HEK293 (cell line): ENCODE measurements at regions of chr12 and their contacts with region 1.

Region 1: DNA sequence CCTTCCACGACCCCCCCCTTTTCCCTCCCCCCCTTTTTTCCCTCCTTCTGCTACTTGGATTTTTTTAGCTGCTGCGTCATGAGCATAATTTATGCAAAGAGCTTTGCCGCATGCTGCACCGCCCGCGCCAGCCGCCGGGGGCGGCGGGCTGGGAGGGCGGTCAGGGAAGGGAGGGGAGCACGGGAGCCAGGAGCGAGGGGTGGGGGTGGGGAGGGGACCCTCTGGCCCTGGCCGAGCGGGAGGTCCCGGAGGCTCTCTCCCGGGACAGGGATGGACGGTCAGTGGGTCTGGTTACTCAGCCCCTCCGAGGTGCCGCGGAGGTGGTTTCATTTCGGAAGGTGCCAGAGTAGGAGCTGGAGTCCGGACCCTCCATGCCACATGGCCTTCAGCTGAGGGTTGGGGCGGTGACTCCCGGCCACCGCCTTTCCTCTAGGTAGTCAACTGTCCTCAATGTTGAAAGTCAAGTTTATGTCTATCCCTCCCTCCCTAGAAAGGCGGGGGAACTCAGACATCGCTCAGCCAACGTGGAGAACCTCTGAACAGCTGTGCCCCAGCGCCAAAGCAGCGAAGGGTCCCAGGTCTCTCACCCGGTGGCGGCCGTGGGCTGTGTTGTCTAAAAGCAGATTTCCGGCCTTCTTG is at the start of gene POU6F1:
- H3K4me3 ChIP-seq: peak within 1 kb of the TSS; percentile 65
- H3K27ac ChIP-seq: peak within 1 kb of the TSS; percentile 91
- H3K4me1 ChIP-seq: peaks cover 9% of the 10 kb centered on the region
- CTCF ChIP-seq: peak; percentile 31; the same call in 1 of the 2 replicates

Region 2: GRCh38 chr12:51183816-51184215 is 34.3 kb before region 1 on chr12:
- CTCF ChIA-PET with region 1: no interaction called
- POLR2A ChIA-PET with region 1: interaction called, 16 read pairs
- H3K4me3 ChIP-seq: no peak overlapping the region
- H3K27ac ChIP-seq: no peak overlapping the region
- H3K4me1 ChIP-seq: 0 out of 2 replicates have a peak, but pooled peaks cover 3% of the 10 kb centered on the region
- CTCF ChIP-seq: no peak

Region 3: GRCh38 chr12:51238510-51239334 is 20.6 kb after region 1 on chr12 and contains the start of gene DAZAP2:
- CTCF ChIA-PET with region 1: interaction called, 5 read pairs
- POLR2A ChIA-PET with region 1: interaction called, 36 read pairs
- H3K4me3 ChIP-seq: peak within 1 kb of the TSS; percentile 68
- H3K27ac ChIP-seq: peak within 1 kb of the TSS; percentile 91
- H3K4me1 ChIP-seq: peaks cover 4% of the 10 kb centered on the region; the same call in 1 of the 2 replicates
- CTCF ChIP-seq: no peak; the same call in none of the 2 replicates

Region 4: GRCh38 chr12:51246254-51246853 is 28.3 kb after region 1 on chr12:
- CTCF ChIA-PET with region 1: no interaction called
- POLR2A ChIA-PET with region 1: interaction called, 11 read pairs
- H3K4me3 ChIP-seq: no peak overlapping the region
- H3K27ac ChIP-seq: no peak overlapping the region
- H3K4me1 ChIP-seq: no peaks in the 10 kb centered on the region
- CTCF ChIP-seq: peak; percentile 64; the same call in 1 of the 2 replicates

Region 5: DNA sequence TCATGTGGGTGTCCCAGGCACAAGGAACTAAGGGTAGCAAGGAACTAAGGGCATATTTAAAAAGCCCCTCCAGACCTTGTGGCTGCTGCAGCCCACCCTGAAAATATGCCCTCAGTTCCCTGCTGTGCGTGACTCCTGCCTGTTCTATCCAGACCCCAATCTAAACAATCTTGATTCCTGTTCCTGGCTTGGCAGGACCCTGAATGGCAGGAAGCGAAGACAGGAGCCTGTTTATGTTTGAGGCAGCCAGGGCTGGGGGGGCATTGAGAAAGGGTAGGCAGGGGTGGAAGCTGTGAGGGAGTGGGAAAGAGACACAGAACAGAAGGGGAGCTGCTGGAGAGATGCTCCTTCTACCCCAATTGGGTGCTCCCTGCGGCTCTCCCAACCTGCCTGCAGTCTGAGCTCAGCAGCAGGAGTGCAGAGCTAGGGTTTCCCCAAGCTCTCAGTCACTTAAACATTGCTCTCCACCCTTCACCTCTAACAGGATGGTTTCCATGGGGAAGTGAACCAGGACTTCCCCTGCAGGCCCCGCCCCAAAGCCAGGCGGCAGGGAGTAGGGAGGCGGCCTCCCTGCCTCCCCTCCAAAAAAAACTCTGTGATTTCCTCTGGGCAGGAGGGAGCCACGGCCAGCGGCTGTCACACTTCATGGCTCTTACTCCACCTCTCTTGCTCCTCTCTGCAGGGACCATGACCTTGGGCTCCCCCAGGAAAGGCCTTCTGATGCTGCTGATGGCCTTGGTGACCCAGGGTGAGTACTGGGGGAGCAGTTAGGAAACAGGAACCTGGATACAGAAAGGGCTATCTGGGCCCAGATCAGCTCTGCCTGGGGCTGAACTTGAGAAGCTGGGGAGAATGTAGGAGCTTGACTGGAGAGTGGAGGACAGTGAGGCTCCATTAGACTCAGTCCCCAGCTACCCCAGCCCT is 694.0 kb after region 1 on chr12:
- CTCF ChIA-PET with region 1: no interaction called
- POLR2A ChIA-PET with region 1: no interaction called
- H3K4me3 ChIP-seq: no peak overlapping the region; the same call in 1 of the 2 replicates
- H3K27ac ChIP-seq: no peak overlapping the region
- H3K4me1 ChIP-seq: no peaks in the 10 kb centered on the region
- CTCF ChIP-seq: no peak